ENCODE measurements at regions of chr1 and their contacts with region 1.

Region 1: GRCh38 chr1:64038965-64039926 is 164.2 kb upstream of the UBE2U start:
- DNase-seq: peak; percentile 37 to 62
- ATAC-seq: peak; percentile 91 to 97 (median 93)
- H3K4me3 ChIP-seq: no peak overlapping the region
- H3K27ac ChIP-seq: peak overlapping the region; percentile 74
- H3K4me1 ChIP-seq: peaks cover 30% of the 10 kb centered on the region
- H3K27me3 ChIP-seq: no peaks in the 10 kb centered on the region
- CTCF ChIP-seq: no peak

Region 2: GRCh38 chr1:63601061-63601460 is 438.2 kb before region 1 on chr1:
- intact Hi-C with region 1: loop called in 1 of 2 experiments (anchors 10 kb)
- DNase-seq: no peak
- ATAC-seq: no peak
- H3K4me3 ChIP-seq: peak overlapping the region; percentile 42
- H3K27ac ChIP-seq: peak overlapping the region; percentile 98
- H3K4me1 ChIP-seq: peaks cover 66% of the 10 kb centered on the region
- H3K27me3 ChIP-seq: no peaks in the 10 kb centered on the region
- CTCF ChIP-seq: no peak

Region 3: DNA sequence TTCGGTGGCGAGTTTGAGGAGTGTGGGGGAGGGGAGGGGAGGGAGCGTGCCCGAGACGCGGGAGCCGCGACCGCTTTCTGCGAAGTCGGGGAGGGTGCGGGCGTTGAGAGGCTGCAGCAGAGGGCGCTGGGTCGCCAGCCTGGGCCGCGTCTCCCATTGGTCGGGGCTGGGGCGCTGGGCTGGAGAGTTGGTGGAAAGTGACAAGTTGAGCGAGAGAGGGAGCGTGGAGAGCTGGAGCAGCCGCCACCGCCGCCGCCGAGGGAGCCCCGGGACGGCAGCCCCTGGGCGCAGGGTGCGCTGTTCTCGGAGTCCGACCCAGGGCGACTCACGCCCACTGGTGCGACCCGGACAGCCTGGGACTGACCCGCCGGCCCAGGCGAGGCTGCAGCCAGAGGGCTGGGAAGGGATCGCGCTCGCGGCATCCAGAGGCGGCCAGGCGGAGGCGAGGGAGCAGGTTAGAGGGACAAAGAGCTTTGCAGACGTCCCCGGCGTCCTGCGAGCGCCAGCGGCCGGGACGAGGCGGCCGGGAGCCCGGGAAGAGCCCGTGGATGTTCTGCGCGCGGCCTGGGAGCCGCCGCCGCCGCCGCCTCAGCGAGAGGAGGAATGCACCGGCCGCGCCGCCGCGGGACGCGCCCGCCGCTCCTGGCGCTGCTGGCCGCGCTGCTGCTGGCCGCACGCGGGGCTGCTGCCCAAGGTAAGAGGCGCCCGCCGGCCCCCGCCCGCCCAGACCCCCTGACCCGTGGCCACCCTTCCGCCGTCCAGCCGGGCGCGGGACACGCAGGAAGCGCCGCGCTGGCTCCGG is 265.2 kb before region 1 on chr1 and contains the start of gene ROR1:
- intact Hi-C with region 1: loop called (anchors 10 kb)
- DNase-seq: peak; percentile 88 to 93
- ATAC-seq: peak; percentile 98 to 99 (median 98)
- H3K4me3 ChIP-seq: peak within 1 kb of the TSS; percentile 83
- H3K27ac ChIP-seq: peak within 1 kb of the TSS; percentile 87
- H3K4me1 ChIP-seq: peaks cover 15% of the 10 kb centered on the region
- H3K27me3 ChIP-seq: peaks cover 0 to 7% (median 0%) of the 10 kb centered on the region in 3 donors
- CTCF ChIP-seq: peak; percentile 61
- total RNA-seq, gene ROR1: 1.2 to 2.8 (median 2.0) TPM

Region 4: DNA sequence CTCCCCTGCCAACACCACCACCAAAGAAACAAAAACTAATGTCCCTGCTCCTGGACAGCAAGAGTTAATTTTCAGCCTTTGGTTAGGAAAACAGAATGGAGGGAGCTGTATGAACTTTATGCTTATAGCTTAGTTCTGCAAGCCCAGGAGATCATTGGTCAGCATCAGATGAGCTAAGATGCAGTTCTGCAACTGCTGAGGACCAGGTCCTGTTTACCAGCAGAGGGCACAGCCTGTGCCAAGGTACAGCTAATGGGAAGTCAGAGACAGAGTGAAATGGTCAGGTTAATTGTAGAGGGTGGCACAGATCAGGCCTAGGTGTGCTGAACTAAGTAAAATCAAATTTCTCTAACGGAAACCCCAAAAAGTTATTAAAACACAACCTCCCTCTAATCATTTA is 104.1 kb before region 1 on chr1:
- intact Hi-C with region 1: loop called in 1 of 2 experiments (anchors 5 kb)
- DNase-seq: no peak
- ATAC-seq: peak; percentile 78 to 94 (median 84)
- H3K4me3 ChIP-seq: no peak overlapping the region
- H3K27ac ChIP-seq: no peak overlapping the region
- H3K4me1 ChIP-seq: peaks cover 3% of the 10 kb centered on the region
- H3K27me3 ChIP-seq: no peaks in the 10 kb centered on the region
- CTCF ChIP-seq: peak; percentile 40

Region 5: GRCh38 chr1:63975481-63975880 is 63.8 kb before region 1 on chr1:
- intact Hi-C with region 1: loop called in 1 of 2 experiments (anchors 5 kb)
- DNase-seq: no peak
- ATAC-seq: no peak
- H3K4me3 ChIP-seq: no peak overlapping the region
- H3K27ac ChIP-seq: no peak overlapping the region
- H3K4me1 ChIP-seq: peaks cover 4% of the 10 kb centered on the region
- H3K27me3 ChIP-seq: no peaks in the 10 kb centered on the region
- CTCF ChIP-seq: no peak